Adrenal gland (tissue), 19 donors: ENCODE measurements at regions of chr5 and their contacts with region 1.

Region 1: GRCh38 chr5:69093771-69094482 is at the start of gene SLC30A5:
- DNase-seq: peak; percentile 99 to 100 (median 100)
- H3K4me3 ChIP-seq: peak within 1 kb of the TSS; percentile 61 to 89 (median 74)
- H3K27ac ChIP-seq: peak within 1 kb of the TSS; percentile 86 to 98 (median 95)
- H3K4me1 ChIP-seq: peaks cover 4 to 24% of the 10 kb centered on the region in 2 donors
- H3K27me3 ChIP-seq: no peaks in the 10 kb centered on the region
- CTCF ChIP-seq: peak; percentile 85 to 98 (median 96)
- POLR2A ChIP-seq: peak; percentile 85 to 96
- total RNA-seq, gene SLC30A5: 31.8 to 76.8 (median 40.4) TPM

Region 2: GRCh38 chr5:69334793-69335268 is 240.9 kb after region 1 on chr5:
- intact Hi-C with region 1: loop called in 1 of 2 experiments (anchors 10 kb)
- DNase-seq: peak; percentile 83 to 96 (median 90)
- H3K4me3 ChIP-seq: no peak overlapping the region
- H3K27ac ChIP-seq: no peak overlapping the region
- H3K4me1 ChIP-seq: peaks cover 0 to 13% of the 10 kb centered on the region in 2 donors
- H3K27me3 ChIP-seq: no peaks in the 10 kb centered on the region
- CTCF ChIP-seq: peak; percentile 65 to 82 (median 76)
- POLR2A ChIP-seq: no peak

Region 3: DNA sequence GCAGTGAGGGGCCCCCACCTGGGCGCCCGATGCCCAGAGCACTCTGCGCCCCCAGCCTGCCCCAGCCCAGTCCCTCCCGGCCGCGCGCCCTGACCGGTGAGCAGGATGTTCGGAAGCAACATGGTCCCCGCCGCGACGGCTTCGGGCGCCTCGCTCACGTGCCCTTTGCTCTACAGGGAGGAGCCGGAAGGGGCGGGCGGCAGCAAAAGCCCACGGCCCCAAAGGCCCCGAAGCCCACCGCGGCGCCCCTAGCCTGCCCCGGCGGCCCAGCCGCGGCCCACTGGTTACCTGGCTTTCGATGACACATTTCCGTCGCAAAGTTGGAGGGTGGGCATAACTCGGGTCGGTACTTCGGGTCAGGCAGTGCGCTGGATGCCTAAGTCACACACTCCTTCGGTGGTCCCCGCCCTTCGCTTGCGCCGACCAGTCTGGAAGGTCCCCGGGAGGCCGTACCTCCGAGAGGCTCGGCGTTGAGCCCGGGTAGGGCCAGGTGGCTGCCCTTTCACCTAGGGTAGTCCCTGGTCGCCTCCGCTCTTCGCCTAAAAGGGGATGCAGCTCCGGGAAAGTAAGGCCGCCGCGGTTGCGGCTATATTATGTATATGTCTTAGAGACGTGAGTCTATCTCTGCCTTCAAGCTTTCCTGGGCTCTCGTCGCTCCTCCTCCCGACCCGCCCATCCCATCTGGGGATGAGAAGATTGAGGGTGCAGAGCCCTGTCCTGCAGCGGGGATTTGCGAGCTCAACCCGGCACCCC is 275.6 kb after region 1 on chr5 and contains the starts of genes AK6, RAD17 and TAF9:
- intact Hi-C with region 1: loop called in 1 of 2 experiments (anchors 10 kb)
- DNase-seq: peak; percentile 92 to 94 (median 92)
- H3K4me3 ChIP-seq: peak within 1 kb of the TSS; percentile 74 to 96 (median 89)
- H3K27ac ChIP-seq: peak within 1 kb of the TSS; percentile 98 to 99 (median 99)
- H3K4me1 ChIP-seq: peaks cover 13 to 40% of the 10 kb centered on the region in 2 donors
- H3K27me3 ChIP-seq: no peaks in the 10 kb centered on the region
- CTCF ChIP-seq: peak in 1 of 6 experiments; percentile 6
- POLR2A ChIP-seq: peak; percentile 54 to 79
- total RNA-seq, gene AK6: 9.6 to 105 (median 33.4) TPM
- total RNA-seq, gene RAD17: 16.7 to 27.3 (median 20.9) TPM
- total RNA-seq, gene TAF9: 32.1 to 92.3 (median 56.8) TPM